Right lobe of liver (tissue), 6 donors: ENCODE measurements at regions of chr19 and their contacts with region 1.

Region 1: GRCh38 chr19:28878862-28879566 is 333.9 kb downstream of the UQCRFS1 start:
- DNase-seq: peak; percentile 65 to 70 (median 67)
- ATAC-seq: peak; percentile 67 to 88 (median 76)
- H3K4me3 ChIP-seq: no peak overlapping the region
- H3K27ac ChIP-seq: no peak overlapping the region
- H3K4me1 ChIP-seq: no peaks in the 10 kb centered on the region
- H3K27me3 ChIP-seq: no peaks in the 10 kb centered on the region
- CTCF ChIP-seq: peak; percentile 64 to 75 (median 70)
- POLR2A ChIP-seq: no peak

Region 2: DNA sequence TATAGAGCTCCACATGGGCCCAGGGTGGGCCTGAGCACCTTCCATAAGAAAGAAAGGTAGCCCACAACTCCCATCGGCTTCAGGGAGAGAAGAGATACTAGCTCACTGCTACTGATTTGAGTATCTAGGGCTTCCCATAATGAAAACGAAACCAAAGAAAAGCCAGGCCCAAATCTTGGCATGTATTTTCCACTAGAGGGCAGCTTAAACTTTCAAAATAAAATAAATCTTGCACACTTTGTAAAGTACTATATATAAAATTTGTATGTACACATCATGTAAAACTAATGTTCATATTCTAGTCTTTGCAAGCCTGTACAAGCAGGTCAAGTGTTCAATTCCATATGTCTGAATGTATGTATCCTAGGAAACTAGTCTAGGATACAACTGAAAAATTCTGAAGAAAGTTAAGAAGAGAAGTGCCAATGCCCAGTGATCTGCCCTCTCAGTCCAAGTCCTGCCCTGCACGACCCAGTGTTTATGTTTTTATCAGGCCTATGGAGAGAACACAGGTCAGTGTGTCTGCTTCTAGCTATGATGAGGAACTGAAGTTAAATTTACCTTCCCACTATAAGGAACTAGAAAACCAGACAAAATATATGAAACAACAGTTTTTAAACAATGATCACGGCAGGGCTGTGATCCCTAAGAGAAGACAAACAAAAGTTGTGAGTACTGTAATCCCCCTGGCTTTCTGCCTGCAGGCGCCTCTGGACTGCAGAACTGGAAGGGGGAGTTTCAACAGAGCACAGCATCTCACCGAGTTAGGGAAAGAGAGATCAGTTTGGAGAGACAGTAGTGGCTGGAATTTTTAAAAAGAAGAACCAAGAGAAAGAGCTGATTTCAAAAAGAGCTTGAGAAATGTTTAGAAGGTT is 141.8 kb before region 1 on chr19:
- intact Hi-C with region 1: loop called (anchors 10 kb)
- DNase-seq: no peak
- ATAC-seq: peak; percentile 75 to 89 (median 85)
- H3K4me3 ChIP-seq: no peak overlapping the region
- H3K27ac ChIP-seq: peak overlapping the region in 1 of 3 donors; percentile 35
- H3K4me1 ChIP-seq: peaks cover 0 to 4% (median 0%) of the 10 kb centered on the region in 4 donors
- H3K27me3 ChIP-seq: no peaks in the 10 kb centered on the region
- CTCF ChIP-seq: peak; percentile 57 to 73 (median 66)
- POLR2A ChIP-seq: no peak